ENCODE measurements at regions of chr3 and their contacts with region 1.

Region 1: GRCh38 chr3:193938613-193939012 is 197.3 kb upstream of the HES1 start:
- DNase-seq: no peak
- ATAC-seq: no peak
- H3K4me3 ChIP-seq: no peak overlapping the region
- H3K27ac ChIP-seq: no peak overlapping the region
- H3K4me1 ChIP-seq: no peaks in the 10 kb centered on the region
- H3K27me3 ChIP-seq: peaks cover 0 to 9% (median 0%) of the 10 kb centered on the region in 9 donors
- CTCF ChIP-seq: no peak
- POLR2A ChIP-seq: no peak

Region 2: GRCh38 chr3:194623449-194624290 is 685.1 kb after region 1 on chr3:
- intact Hi-C with region 1: loop called in 1 of 10 experiments (anchors 10 kb)
- DNase-seq: no peak
- ATAC-seq: no peak
- H3K4me3 ChIP-seq: no peak overlapping the region
- H3K27ac ChIP-seq: no peak overlapping the region
- H3K4me1 ChIP-seq: no peaks in the 10 kb centered on the region
- H3K27me3 ChIP-seq: no peaks in the 10 kb centered on the region
- CTCF ChIP-seq: no peak
- POLR2A ChIP-seq: no peak

Measured in heart left ventricle (tissue), 16 donors.